ENCODE measurements at regions of chr17 and their contacts with region 1.

Region 1: GRCh38 chr17:43316522-43317142 is 82.2 kb upstream of the ARL4D start:
- DNase-seq: peak; percentile 41
- H3K4me3 ChIP-seq: no peak overlapping the region
- H3K27ac ChIP-seq: no peak overlapping the region; the same call in 1 of the 2 replicates
- H3K4me1 ChIP-seq: no peaks in the 10 kb centered on the region
- H3K27me3 ChIP-seq: no peaks in the 10 kb centered on the region

Region 2: DNA sequence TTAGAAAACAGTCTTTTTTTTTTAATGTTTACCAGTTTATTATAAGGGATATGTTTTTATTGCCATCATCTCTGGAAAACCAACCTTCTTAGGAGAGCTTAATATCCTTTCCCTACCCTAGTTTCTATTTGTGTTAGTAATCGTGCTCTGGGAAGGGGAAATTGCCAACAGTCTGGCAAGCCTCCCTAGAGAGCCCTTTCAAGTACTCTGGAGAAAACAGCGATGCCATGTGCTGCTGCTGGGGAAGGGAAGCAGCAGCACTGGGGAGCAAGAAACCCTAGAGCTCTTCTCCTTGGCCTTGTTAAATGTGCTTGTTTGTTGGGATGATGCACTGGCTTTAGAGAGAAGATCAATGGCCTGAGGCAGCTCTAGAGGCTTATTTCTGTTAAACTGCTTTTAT is 717.7 kb before region 1 on chr17:
- in situ Hi-C with region 1: no loop called
- DNase-seq: peak; percentile 23
- H3K4me3 ChIP-seq: no peak overlapping the region
- H3K27ac ChIP-seq: no peak overlapping the region
- H3K4me1 ChIP-seq: no peaks in the 10 kb centered on the region
- H3K27me3 ChIP-seq: no peaks in the 10 kb centered on the region

Region 3: GRCh38 chr17:43211480-43212402 is 104.9 kb before region 1 on chr17 and contains the start of gene TMEM106A:
- in situ Hi-C with region 1: loop called (anchors 10 kb)
- DNase-seq: peak; percentile 94
- H3K4me3 ChIP-seq: peak within 1 kb of the TSS; percentile 75
- H3K27ac ChIP-seq: peak within 1 kb of the TSS; percentile 83
- H3K4me1 ChIP-seq: peaks cover 27% of the 10 kb centered on the region
- H3K27me3 ChIP-seq: no peaks in the 10 kb centered on the region
- total RNA-seq, gene TMEM106A: 10.2 and 15.4 TPM in 2 replicates

Region 4: GRCh38 chr17:43372273-43372911 is 55.8 kb after region 1 on chr17:
- in situ Hi-C with region 1: no loop called
- DNase-seq: no peak
- H3K4me3 ChIP-seq: no peak overlapping the region
- H3K27ac ChIP-seq: no peak overlapping the region
- H3K4me1 ChIP-seq: peaks cover 9% of the 10 kb centered on the region
- H3K27me3 ChIP-seq: no peaks in the 10 kb centered on the region

Measured in GM23248 (cell line).